ENCODE measurements at regions of chr2 and their contacts with region 1.

Region 1: DNA sequence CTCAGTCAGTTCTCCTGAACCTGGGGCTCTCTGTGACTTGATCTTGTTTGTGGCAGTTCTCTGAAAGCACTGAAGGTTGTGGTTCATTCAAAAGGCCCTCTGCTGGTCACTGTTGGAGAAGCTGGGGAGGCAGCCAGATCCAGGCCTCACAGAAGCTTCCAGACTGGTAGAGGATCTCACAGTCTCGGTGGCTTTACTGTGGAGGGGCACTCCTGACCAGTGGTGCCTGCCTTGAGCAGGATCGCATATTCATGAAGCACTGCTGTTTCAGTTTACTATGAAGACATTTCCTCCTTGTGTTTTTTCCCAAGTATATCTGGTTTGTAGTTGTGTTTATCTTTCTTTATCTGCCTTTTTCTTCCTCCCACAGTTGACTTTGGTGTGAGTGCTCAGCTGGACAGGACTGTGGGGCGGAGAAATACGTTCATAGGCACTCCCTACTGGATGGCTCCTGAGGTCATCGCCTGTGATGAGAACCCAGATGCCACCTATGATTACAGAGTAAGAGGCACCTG is 133.9 kb downstream of the MAP4K4 start:
- DNase-seq: peak; percentile 22 to 53 (median 46)
- H3K4me3 ChIP-seq: no peak overlapping the region
- H3K4me3 Mint-ChIP-seq: no peak overlapping the region
- H3K27ac ChIP-seq: peak overlapping the region in 1 of 2 donors; percentile 40
- H3K27ac Mint-ChIP-seq: peak overlapping the region in 1 of 7 donors; percentile 79
- H3K4me1 ChIP-seq: peaks cover 0 to 9% of the 10 kb centered on the region in 2 donors
- H3K4me1 Mint-ChIP-seq: peaks cover 15% of the 10 kb centered on the region
- H3K27me3 ChIP-seq: no peaks in the 10 kb centered on the region
- H3K27me3 Mint-ChIP-seq: no peaks in the 10 kb centered on the region
- CTCF ChIP-seq: peak; percentile 46

Region 2: GRCh38 chr2:101012706-101013181 is 818.7 kb before region 1 on chr2:
- intact Hi-C with region 1: loop called in 1 of 2 experiments (anchors 10 kb)
- DNase-seq: peak; percentile 32 to 47 (median 34)
- H3K4me3 ChIP-seq: no peak overlapping the region
- H3K4me3 Mint-ChIP-seq: no peak overlapping the region
- H3K27ac ChIP-seq: no peak overlapping the region
- H3K27ac Mint-ChIP-seq: peak overlapping the region in 1 of 7 donors; percentile 37
- H3K4me1 ChIP-seq: no peaks in the 10 kb centered on the region
- H3K4me1 Mint-ChIP-seq: peaks cover 3% of the 10 kb centered on the region
- H3K27me3 ChIP-seq: no peaks in the 10 kb centered on the region
- H3K27me3 Mint-ChIP-seq: no peaks in the 10 kb centered on the region
- CTCF ChIP-seq: peak; percentile 90

Region 3: DNA sequence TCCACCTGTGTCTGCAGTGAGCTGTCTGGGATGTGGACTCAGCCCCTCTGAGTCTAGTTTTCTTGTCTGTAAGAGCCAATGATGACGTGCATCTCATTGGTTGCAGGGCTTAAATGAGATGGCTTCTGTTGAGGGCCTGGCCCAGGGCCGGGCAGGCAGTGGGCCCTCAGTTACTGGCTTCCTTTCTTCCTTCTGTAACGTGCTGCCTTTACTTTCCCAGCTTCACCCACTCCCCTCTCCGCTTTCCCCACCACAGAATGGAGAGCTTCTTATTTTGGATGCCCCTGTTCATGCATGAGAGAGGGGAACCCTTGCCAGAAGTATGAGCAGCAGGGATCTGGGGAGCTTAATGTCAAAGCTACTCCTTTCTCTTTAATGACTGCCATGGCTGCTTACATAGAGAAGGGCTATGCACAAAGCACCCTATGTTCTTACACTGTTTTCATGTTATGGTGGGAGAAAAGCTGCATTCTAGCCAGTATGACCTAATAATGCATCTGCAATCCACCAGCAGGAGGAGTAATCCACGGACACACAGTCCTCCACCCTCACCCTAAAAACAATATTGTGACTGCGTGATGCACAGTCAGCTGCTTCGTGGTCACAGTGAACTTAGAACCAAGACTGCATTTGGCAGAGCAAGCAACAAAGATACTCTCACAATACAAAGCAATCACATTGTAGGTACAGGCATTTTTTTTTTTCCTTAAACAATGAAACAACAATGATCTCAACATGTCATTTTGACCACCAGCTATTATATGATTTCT is 481.3 kb before region 1 on chr2:
- intact Hi-C with region 1: loop called in 1 of 2 experiments (anchors 5 kb)
- DNase-seq: peak in 2 of 3 donors; percentile 25 to 43
- H3K4me3 ChIP-seq: no peak overlapping the region
- H3K4me3 Mint-ChIP-seq: no peak overlapping the region
- H3K27ac ChIP-seq: no peak overlapping the region
- H3K27ac Mint-ChIP-seq: no peak overlapping the region
- H3K4me1 ChIP-seq: no peaks in the 10 kb centered on the region
- H3K4me1 Mint-ChIP-seq: peaks cover 11% of the 10 kb centered on the region
- H3K27me3 ChIP-seq: no peaks in the 10 kb centered on the region
- H3K27me3 Mint-ChIP-seq: peaks cover 0 to 1% (median 0%) of the 10 kb centered on the region in 3 donors
- CTCF ChIP-seq: peak; percentile 26

Region 4: GRCh38 chr2:101419096-101419663 is 412.2 kb before region 1 on chr2:
- intact Hi-C with region 1: loop called (anchors 2 kb)
- DNase-seq: peak; percentile 51 to 73 (median 72)
- H3K4me3 ChIP-seq: no peak overlapping the region
- H3K4me3 Mint-ChIP-seq: no peak overlapping the region
- H3K27ac ChIP-seq: no peak overlapping the region
- H3K27ac Mint-ChIP-seq: peak overlapping the region in 1 of 7 donors; percentile 44
- H3K4me1 ChIP-seq: peaks cover 9 to 10% of the 10 kb centered on the region in 2 donors
- H3K4me1 Mint-ChIP-seq: peaks cover 12% of the 10 kb centered on the region
- H3K27me3 ChIP-seq: no peaks in the 10 kb centered on the region
- H3K27me3 Mint-ChIP-seq: peaks cover 0 to 1% (median 0%) of the 10 kb centered on the region in 3 donors
- CTCF ChIP-seq: peak; percentile 79

Measured in CD14-positive monocyte (primary cell).